ENCODE measurements at regions of chr4 and their contacts with region 1.

Region 1: GRCh38 chr4:26404743-26405206 is 84.0 kb downstream of the RBPJ start:
- DNase-seq: no peak
- ATAC-seq: peak in 1 of 2 donors; percentile 40
- H3K4me3 ChIP-seq: no peak overlapping the region
- H3K27ac ChIP-seq: no peak overlapping the region
- H3K4me1 ChIP-seq: no peaks in the 10 kb centered on the region
- H3K27me3 ChIP-seq: no peaks in the 10 kb centered on the region

Region 2: GRCh38 chr4:25981749-25982148 is 423.0 kb before region 1 on chr4:
- intact Hi-C with region 1: loop called in 1 of 4 experiments (anchors 10 kb)
- DNase-seq: peak; percentile 59 to 73 (median 73)
- ATAC-seq: peak; percentile 90 to 94
- H3K4me3 ChIP-seq: no peak overlapping the region
- H3K27ac ChIP-seq: peak overlapping the region; percentile 72
- H3K4me1 ChIP-seq: no peaks in the 10 kb centered on the region
- H3K27me3 ChIP-seq: no peaks in the 10 kb centered on the region

Region 3: DNA sequence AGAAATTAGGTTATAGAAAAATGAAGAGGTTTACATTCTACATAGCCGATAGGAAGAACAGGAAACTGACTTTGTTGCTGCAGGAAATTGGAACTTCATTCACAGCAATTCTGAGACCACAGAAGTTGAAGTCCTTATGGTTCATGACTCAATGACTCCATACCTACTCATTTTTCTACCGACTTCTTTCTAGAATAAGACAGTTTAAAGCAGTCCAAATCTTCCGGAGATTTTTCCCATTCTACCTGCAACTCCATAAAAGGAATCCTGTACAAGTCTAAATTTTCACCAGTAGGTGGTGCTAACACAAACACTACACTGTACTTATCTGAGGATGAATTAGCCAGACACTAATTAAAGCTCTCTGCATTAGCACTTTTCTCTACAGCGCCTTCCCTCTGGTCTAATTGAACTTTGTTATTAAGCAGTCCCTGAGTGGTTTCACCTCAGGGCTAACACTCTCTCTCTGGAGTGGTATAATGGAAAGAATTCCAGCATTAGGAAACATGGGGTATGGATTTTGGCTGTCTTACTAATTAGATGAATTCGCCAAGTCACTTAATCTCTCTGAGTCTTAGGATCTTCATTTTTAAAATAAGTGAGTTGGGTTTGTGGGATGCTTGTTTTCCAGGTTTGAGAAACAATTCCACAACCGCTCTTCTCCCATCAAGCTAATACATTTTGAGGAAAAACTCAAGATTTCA is 322.8 kb before region 1 on chr4:
- intact Hi-C with region 1: loop called in 1 of 4 experiments (anchors 5 kb)
- DNase-seq: no peak
- ATAC-seq: peak; percentile 49 to 77
- H3K4me3 ChIP-seq: no peak overlapping the region
- H3K27ac ChIP-seq: no peak overlapping the region
- H3K4me1 ChIP-seq: peaks cover 4% of the 10 kb centered on the region
- H3K27me3 ChIP-seq: no peaks in the 10 kb centered on the region

Region 4: DNA sequence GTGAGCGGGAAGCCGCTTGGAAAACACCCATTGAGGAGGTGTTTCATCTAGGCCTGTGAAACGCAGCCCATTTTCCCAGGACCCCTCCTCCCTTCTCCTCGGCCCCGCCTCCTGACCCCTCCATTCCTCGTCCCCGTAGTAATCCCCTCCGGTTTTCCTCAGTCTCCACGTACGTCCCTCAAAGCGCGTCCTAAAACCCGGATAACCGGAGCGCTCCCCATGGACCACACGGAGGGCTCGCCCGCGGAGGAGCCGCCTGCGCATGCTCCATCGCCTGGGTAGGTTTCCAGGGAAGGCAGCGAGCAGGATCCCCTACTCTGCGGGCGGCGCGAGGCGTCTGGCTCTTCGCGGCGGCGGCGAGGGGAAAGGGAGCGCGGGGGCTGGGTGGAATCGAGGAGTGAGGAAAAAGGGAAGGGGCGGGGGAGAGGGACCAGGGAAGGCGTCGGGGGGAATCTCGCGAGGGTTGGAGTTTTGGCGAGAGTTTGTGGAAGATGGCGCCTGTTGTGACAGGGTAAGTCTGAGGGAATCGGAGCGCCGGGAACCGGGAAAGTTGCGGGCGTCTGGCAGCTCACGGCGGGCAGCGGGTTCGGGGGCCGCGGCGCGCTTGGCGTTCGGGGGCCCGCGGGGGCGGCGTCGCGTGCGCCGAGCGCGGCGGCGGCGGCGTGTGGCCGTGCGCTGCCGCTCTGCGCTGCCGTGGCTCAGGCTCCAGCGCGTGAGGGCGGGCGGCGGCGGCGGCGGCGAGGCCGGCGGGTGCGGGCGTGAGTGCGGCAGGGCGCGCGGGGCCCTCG is 84.0 kb before region 1 on chr4 and contains the start of gene RBPJ:
- intact Hi-C with region 1: loop called in 1 of 4 experiments (anchors 5 kb)
- DNase-seq: peak; percentile 92 to 96 (median 96)
- ATAC-seq: peak; percentile 87 to 91
- H3K4me3 ChIP-seq: peak within 1 kb of the TSS; percentile 98
- H3K27ac ChIP-seq: peak within 1 kb of the TSS; percentile 95
- H3K4me1 ChIP-seq: no peaks in the 10 kb centered on the region
- H3K27me3 ChIP-seq: no peaks in the 10 kb centered on the region
- total RNA-seq, gene RBPJ: 42.1 to 45.9 (median 44.2) TPM

Measured in right cardiac atrium (tissue), 5 donors.